Breast epithelium (tissue), 4 donors: ENCODE measurements at regions of chr16 and their contacts with region 1.

Region 1: DNA sequence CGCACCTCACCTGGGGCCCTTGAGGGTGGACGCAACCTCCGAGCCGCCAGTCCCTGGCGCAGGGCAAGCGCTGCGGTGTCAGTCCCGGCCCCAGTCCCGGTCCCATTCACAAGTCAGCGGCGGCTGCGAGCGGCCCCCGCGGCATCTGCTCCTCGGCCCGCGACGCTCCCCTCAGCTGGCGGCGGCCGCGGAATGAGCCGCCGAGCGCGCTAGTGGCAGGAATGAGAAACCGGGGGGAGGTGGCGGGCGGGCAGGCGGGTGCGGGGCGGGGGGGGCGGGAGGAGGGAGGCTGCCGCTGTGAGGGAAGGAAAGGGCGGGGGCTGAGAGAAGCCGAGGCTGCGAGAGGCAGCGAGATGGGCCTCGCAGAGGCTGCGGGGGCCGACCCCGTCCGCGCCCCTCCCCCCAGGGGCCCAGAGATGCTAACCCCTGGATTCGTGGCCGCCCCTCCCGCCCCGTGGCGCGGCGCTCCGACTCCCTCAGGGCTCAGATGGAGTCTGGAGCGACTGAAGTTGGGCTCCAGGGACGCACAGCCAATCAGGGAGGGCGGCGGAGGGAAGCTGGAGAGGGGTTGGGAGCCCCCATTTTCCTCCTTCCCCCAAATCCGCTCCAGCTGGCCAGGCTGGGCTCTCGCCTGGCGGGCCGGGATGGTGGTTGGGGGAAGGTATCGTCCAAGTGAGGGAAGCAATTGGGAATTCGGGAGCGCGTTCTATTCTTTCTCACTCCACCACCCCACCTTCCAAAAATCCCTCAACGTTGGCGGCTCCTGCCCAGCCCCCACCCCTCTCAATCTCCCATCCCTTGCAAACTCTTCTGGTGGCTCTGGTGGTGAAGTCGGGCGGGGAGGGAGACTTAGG is at the start of gene CDH11:
- DNase-seq: peak in 1 of 2 donors; percentile 51
- H3K4me3 ChIP-seq: peak within 1 kb of the TSS; percentile 70 to 89 (median 71)
- H3K27ac ChIP-seq: peak within 1 kb of the TSS; percentile 90 to 96
- H3K4me1 ChIP-seq: peaks cover 0 to 3% of the 10 kb centered on the region in 2 donors
- H3K27me3 ChIP-seq: peaks cover 0 to 33% of the 10 kb centered on the region in 2 donors
- CTCF ChIP-seq: no peak
- POLR2A ChIP-seq: no peak
- total RNA-seq, gene CDH11: 41.8 to 70.0 (median 52.8) TPM

Region 2: DNA sequence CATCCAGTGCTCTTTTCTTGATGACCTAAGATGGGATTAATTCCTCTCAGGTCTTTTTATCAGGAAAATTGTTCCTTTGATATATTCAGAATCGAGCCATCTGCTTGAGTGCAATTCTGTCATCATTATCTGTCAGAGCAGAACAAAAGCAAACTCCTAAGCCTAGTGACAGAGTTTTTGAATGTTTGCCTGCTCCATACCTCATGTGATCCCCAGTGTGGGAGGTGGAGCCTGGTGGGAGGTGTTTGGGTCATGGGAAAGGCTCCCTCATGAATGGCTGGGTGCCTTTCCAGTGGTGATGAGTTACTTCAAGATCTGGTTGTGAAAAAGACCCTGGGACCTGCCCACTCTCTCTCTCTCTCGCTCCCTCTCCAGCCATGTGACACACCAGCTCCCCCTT is 628.4 kb before region 1 on chr16:
- intact Hi-C with region 1: no loop called
- DNase-seq: no peak
- H3K4me3 ChIP-seq: no peak overlapping the region
- H3K27ac ChIP-seq: no peak overlapping the region
- H3K4me1 ChIP-seq: no peaks in the 10 kb centered on the region
- H3K27me3 ChIP-seq: no peaks in the 10 kb centered on the region
- CTCF ChIP-seq: no peak
- POLR2A ChIP-seq: no peak

Region 3: DNA sequence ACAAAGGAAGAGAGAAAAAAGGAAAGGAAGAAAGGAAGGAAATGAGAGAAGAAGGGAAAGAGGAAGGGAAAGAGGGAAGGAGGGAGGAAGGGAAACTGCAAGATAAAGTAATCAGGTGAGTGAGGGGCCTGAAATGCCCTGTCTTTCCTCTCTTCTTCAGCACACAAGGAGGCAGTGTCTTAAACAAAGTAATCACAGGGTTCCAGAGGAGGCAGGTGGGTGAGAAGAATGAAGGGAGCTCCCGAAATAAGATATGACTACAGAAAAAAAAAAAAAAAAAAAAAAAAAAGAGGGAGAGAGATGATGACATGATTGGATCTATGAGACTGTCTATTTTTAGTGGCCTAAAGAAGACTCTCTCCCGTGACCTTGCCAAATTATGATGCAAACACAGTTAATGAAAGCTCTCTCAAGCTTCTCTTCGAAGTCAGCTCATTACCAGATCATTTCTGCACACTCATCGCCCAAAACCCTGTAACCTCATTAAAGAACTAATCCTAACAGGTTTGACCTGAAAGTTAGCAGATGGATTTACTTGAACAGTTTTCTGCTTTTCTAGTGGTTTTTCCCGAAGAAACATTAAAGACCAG is 53.9 kb before region 1 on chr16:
- intact Hi-C with region 1: no loop called
- DNase-seq: no peak
- H3K4me3 ChIP-seq: no peak overlapping the region
- H3K27ac ChIP-seq: no peak overlapping the region
- H3K4me1 ChIP-seq: no peaks in the 10 kb centered on the region
- H3K27me3 ChIP-seq: no peaks in the 10 kb centered on the region
- CTCF ChIP-seq: no peak
- POLR2A ChIP-seq: no peak

Region 4: GRCh38 chr16:65524997-65525396 is 402.9 kb after region 1 on chr16:
- intact Hi-C with region 1: no loop called
- DNase-seq: no peak
- H3K4me3 ChIP-seq: no peak overlapping the region
- H3K27ac ChIP-seq: no peak overlapping the region
- H3K4me1 ChIP-seq: no peaks in the 10 kb centered on the region
- H3K27me3 ChIP-seq: no peaks in the 10 kb centered on the region
- CTCF ChIP-seq: no peak
- POLR2A ChIP-seq: no peak

Region 5: DNA sequence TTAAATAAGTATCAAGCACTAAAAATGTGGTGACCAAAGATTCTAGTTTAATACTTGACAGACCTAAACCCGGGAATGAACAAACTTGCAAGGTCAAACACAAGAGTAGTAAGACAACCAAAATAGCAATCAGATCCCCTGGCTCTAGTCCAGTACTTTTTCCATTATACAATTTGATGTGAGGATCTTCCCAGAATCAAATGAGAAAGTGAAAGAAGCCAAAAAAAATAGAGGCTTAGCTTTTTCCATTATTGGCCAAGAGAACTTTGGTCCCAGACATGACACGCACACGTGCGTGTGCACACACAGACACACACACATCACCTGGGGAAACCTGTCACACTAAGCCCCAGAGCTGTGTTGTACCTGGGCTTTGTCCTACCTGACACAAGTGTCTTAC is 943.8 kb after region 1 on chr16:
- intact Hi-C with region 1: loop called (anchors 10 kb)
- DNase-seq: no peak
- H3K4me3 ChIP-seq: no peak overlapping the region
- H3K27ac ChIP-seq: peak overlapping the region in 1 of 2 donors; percentile 52
- H3K4me1 ChIP-seq: no peaks in the 10 kb centered on the region
- H3K27me3 ChIP-seq: no peaks in the 10 kb centered on the region
- CTCF ChIP-seq: no peak
- POLR2A ChIP-seq: no peak